HEK293 (cell line): ENCODE measurements at regions of chr12 and their contacts with region 1.

Region 1: GRCh38 chr12:50055831-50056638 is 1.4 kb upstream of the ASIC1 start:
- H3K4me3 ChIP-seq: no peak overlapping the region
- H3K27ac ChIP-seq: no peak overlapping the region
- H3K4me1 ChIP-seq: no peaks in the 10 kb centered on the region; the same call in 1 of the 2 replicates
- CTCF ChIP-seq: peak; percentile 86

Region 2: DNA sequence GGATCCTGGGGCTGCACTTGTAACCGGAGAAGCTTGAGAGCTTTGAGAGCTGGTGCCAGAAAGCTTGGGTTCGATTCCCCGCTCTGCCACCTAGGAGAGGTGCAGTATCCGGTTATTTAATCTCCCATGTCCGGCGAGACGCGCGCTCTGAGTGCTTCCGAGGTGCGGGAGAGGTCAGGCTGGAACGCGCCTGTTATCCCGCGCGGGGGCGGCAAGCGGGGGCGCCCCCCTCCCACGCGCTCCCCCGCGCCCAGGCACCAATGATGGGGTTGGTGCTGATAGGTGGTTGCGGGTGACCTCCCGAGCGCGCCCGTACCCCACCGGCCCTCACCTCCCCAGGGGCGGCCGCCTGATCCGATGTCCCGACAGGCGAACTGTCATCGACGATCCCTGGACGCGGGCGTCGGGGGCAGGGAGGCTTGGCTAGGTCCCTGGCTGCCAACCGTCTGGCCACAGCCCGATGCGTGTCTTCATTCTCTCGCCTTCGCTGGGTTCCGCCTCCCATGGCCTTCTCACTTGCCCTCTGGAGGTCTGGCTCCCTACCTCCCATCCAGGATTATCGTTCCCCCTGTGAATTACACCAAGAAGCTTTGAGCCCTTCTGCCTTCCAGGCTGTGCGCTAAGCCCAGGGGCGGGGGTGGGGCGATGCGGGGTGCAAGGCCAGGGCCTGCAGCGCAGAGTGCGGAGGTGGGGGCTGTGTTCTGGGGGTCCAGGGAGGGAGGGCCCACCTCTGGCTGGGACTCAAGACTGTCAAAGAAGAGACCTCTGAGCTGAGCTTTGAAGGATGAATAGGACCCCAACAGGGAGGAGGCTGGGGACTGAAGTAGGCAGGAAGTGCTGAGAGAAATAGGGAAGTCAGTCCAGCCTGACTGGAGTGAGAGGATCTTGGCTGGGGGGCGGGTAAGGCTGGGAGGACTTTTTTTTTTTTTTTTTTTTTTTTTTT is 23.1 kb before region 1 on chr12:
- CTCF ChIA-PET with region 1: interaction called, 67 read pairs
- POLR2A ChIA-PET with region 1: no interaction called
- H3K4me3 ChIP-seq: no peak overlapping the region
- H3K27ac ChIP-seq: no peak overlapping the region
- H3K4me1 ChIP-seq: no peaks in the 10 kb centered on the region
- CTCF ChIP-seq: no peak

Region 3: GRCh38 chr12:50043854-50044253 is 12.2 kb before region 1 on chr12:
- CTCF ChIA-PET with region 1: interaction called, 67 read pairs
- POLR2A ChIA-PET with region 1: no interaction called
- H3K4me3 ChIP-seq: no peak overlapping the region
- H3K27ac ChIP-seq: no peak overlapping the region
- H3K4me1 ChIP-seq: no peaks in the 10 kb centered on the region
- CTCF ChIP-seq: no peak

Region 4: DNA sequence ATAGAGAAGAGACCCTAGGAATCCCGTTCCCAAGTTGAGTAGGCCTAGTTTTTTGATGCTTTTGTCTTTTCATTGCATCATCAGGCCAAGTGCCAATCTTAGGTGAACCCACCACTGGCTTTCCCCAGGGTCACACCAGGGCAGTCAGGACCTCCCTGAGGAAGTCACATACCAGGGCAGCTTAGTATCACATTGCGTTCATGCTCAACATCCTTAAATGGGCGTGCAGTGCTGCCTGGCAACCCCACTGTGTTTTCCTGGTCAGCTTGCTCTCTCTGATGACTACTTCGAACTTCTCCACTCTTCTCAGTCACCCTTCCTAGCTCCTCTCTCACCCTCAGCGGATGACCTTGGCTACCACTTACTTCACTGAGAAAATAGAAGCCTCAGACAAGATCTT is 10.4 kb after region 1 on chr12:
- CTCF ChIA-PET with region 1: interaction called, 40 read pairs
- POLR2A ChIA-PET with region 1: no interaction called
- H3K4me3 ChIP-seq: no peak overlapping the region
- H3K27ac ChIP-seq: no peak overlapping the region
- H3K4me1 ChIP-seq: no peaks in the 10 kb centered on the region
- CTCF ChIP-seq: no peak

Region 5: DNA sequence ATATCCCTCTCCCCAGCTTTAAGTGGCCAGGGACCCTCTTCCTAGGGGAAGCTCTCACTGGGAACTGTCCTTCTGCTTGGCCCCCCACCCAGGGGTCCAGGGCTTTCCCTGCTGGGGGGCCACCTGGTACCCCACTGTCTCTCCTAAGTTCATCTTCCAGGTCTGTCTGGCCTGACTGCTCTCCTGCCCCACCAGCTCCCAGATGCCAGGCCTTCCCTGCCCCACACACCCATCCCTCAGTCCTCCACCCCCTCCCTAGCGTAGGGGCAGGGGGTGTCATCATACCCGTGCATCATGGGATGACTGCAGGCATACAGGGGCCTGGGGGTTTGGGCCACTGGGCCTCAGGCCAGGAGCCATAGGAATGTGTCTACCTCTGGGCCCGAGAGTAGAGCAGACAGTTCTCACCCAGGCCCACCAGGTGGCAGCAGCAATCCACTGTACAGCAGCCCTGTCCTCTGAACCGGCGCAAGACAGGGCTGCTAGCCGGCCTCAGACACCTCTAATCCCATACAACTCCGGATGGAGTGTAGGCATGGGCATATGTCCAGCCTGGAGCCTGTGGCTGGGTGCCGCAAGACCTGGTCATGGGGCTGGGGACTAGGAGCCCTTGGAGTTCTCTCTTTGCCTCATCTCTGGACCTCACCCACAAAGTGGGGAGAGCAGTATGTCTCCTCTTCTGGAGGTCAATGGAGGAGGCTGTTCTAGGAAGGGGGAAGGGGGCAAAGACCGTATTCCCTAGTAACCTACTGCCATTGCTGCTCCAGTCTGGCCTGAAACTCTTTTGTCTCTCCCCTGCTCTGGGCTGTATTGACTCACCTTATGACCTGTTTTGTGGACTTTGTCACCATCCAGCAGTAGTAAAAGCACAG is 19.1 kb after region 1 on chr12:
- CTCF ChIA-PET with region 1: interaction called, 40 read pairs
- POLR2A ChIA-PET with region 1: no interaction called
- H3K4me3 ChIP-seq: no peak overlapping the region
- H3K27ac ChIP-seq: no peak overlapping the region
- H3K4me1 ChIP-seq: no peaks in the 10 kb centered on the region
- CTCF ChIP-seq: peak; percentile 95

Region 6: GRCh38 chr12:50103767-50104321 is 47.8 kb after region 1 on chr12 and contains the start of gene GPD1:
- CTCF ChIA-PET with region 1: no interaction called
- POLR2A ChIA-PET with region 1: no interaction called
- H3K4me3 ChIP-seq: no peak within 1 kb of the TSS
- H3K27ac ChIP-seq: no peak within 1 kb of the TSS; the same call in 1 of the 2 replicates
- H3K4me1 ChIP-seq: peaks cover 7% of the 10 kb centered on the region
- CTCF ChIP-seq: no peak

Region 7: GRCh38 chr12:50589650-50590435 is 533.8 kb after region 1 on chr12:
- CTCF ChIA-PET with region 1: no interaction called
- POLR2A ChIA-PET with region 1: no interaction called
- H3K4me3 ChIP-seq: no peak overlapping the region
- H3K27ac ChIP-seq: no peak overlapping the region
- H3K4me1 ChIP-seq: no peaks in the 10 kb centered on the region
- CTCF ChIP-seq: no peak